ENCODE measurements at regions of chr4 and their contacts with region 1.

Region 1: DNA sequence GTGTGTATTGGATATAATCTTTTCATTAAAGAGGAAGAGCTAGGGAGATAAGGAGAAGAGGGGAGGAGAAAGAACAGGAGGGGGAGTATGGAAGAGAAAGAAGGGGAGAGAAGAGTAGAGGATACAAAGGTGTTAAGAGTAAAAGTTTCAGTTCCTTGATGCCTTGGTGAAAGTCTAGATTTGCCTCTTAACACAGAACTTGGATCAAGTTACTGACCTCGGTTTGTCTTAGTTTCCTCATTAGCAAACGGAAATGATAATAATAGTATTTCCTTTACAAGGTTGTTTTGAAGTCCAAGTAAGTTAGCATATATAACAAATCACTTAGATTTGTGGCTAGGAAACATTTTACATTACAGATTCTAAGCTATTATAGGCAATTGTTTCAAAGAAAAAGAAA is 287.1 kb downstream of the PPARGC1A start:
- DNase-seq: no peak
- H3K4me3 ChIP-seq: no peak overlapping the region
- H3K27ac ChIP-seq: no peak overlapping the region
- H3K4me1 ChIP-seq: no peaks in the 10 kb centered on the region
- H3K27me3 ChIP-seq: no peaks in the 10 kb centered on the region
- CTCF ChIP-seq: no peak
- POLR2A ChIP-seq: no peak

Region 2: DNA sequence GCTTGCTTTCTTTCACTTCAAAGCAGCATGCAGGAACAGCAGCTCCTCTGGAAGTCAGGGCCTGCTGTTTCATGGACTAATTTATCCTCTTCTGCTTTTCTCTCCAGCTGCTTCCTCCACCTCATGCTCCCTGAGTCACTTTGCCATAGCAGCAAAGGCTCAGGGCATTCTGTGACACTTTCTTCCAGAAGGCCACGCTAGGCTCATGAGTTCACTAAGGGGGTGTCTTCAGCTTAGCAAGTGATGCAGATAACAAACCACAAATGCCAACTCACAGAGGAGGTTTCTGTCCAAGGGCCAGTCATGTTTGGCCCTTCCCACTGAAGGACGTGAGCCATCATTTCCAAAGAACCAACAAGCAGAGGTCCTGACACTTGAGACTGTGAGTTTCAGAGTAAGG is 1287.1 kb before region 1 on chr4:
- intact Hi-C with region 1: loop called (anchors 10 kb)
- DNase-seq: no peak
- H3K4me3 ChIP-seq: no peak overlapping the region
- H3K27ac ChIP-seq: no peak overlapping the region
- H3K4me1 ChIP-seq: no peaks in the 10 kb centered on the region
- H3K27me3 ChIP-seq: no peaks in the 10 kb centered on the region
- CTCF ChIP-seq: no peak
- POLR2A ChIP-seq: no peak

Region 3: GRCh38 chr4:22556495-22556894 is 1046.2 kb before region 1 on chr4:
- intact Hi-C with region 1: no loop called
- DNase-seq: no peak
- H3K4me3 ChIP-seq: no peak overlapping the region
- H3K27ac ChIP-seq: no peak overlapping the region
- H3K4me1 ChIP-seq: no peaks in the 10 kb centered on the region
- H3K27me3 ChIP-seq: no peaks in the 10 kb centered on the region
- CTCF ChIP-seq: no peak
- POLR2A ChIP-seq: no peak

Region 4: GRCh38 chr4:23667659-23668058 is 64.9 kb after region 1 on chr4:
- intact Hi-C with region 1: no loop called
- DNase-seq: no peak
- H3K4me3 ChIP-seq: no peak overlapping the region
- H3K27ac ChIP-seq: no peak overlapping the region
- H3K4me1 ChIP-seq: no peaks in the 10 kb centered on the region
- H3K27me3 ChIP-seq: no peaks in the 10 kb centered on the region
- CTCF ChIP-seq: no peak
- POLR2A ChIP-seq: no peak

Measured in breast epithelium (tissue), 4 donors.